PC-9 (cell line): ENCODE measurements at regions of chr2 and their contacts with region 1.

Region 1: DNA sequence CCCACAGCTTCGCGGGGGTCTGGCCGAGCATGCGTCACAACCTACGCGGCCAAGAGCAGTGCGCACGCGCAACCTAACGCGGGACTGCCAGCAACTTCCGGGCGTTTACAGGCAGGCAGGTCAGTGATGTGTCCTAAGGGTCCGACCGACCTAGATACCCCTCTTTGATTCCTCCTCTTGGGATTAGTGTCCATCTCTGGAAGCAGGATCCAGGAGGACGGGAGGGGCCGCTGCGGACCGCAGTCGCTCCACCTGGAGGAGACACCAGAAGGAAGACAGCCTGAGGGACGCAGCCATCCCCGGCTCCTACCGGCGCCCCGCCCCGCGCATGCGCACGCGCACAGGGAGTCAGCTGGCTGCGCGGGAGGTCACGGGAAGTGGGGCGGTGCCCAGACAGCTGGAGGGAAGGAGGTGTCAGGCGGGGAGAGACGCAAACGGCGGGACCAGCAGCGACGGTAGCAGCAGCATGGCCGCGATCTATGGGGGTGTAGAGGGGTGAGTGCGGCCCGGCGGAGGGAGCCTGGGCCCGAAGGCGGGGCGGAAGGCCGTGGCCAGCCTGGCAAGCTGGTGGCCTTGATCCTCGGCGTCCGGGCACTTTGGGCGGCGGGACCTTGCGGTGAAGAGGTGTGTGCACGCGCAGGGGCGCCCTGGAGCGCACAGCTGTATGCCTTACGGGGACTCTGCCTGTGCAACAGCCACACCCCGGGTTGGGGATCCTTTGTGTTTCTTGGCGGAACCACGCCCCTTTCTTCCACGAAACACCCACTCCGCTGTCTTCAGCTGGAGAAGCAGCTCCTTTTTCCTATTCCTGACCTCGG is at the start of gene NAGK:
- DNase-seq: peak; percentile 86 to 96
- H3K4me3 ChIP-seq: peak within 1 kb of the TSS; percentile 72
- H3K27ac ChIP-seq: peak within 1 kb of the TSS; percentile 40
- H3K4me1 ChIP-seq: peaks cover 25% of the 10 kb centered on the region
- H3K27me3 ChIP-seq: no peaks in the 10 kb centered on the region
- CTCF ChIP-seq: no peak
- total RNA-seq, gene NAGK: 32.6 and 34.1 TPM in 2 replicates

Region 2: GRCh38 chr2:70984576-70985282 is 83.7 kb before region 1 on chr2:
- CTCF ChIA-PET with region 1: interaction called, 11 read pairs
- POLR2A ChIA-PET with region 1: no interaction called
- intact Hi-C with region 1: no loop called
- DNase-seq: peak in 1 of 2 experiments; percentile 52
- H3K4me3 ChIP-seq: no peak overlapping the region
- H3K27ac ChIP-seq: no peak overlapping the region
- H3K4me1 ChIP-seq: no peaks in the 10 kb centered on the region
- H3K27me3 ChIP-seq: no peaks in the 10 kb centered on the region
- CTCF ChIP-seq: no peak

Region 3: DNA sequence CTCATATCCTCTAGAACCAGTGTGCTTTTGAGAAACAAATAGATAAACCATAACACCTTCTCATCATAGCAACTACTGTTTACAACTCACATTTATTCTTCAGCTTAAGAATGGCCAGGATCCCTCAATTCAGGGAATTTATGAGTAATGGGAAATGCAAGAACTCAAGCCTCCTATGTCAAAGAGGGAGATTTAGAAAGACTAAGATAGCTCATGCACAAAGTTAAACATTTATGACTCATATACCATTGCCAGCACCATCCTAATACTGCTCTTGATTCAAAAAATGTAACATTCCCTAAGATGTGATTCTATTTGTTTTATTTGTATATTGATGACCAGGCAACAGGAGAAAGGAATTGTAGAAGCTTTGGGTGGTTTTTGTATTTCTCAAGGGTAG is 906.4 kb after region 1 on chr2:
- CTCF ChIA-PET with region 1: no interaction called
- POLR2A ChIA-PET with region 1: no interaction called
- intact Hi-C with region 1: no loop called
- DNase-seq: no peak
- H3K4me3 ChIP-seq: no peak overlapping the region
- H3K27ac ChIP-seq: no peak overlapping the region
- H3K4me1 ChIP-seq: no peaks in the 10 kb centered on the region
- H3K27me3 ChIP-seq: no peaks in the 10 kb centered on the region
- CTCF ChIP-seq: no peak